Left ventricle myocardium superior (tissue), 1 donor: ENCODE measurements at regions of chr9 and their contacts with region 1.

Region 1: GRCh38 chr9:83219152-83219923 is 156.4 kb upstream of the RASEF start:
- DNase-seq: peak; percentile 87
- ATAC-seq: peak; percentile 98

Region 2: DNA sequence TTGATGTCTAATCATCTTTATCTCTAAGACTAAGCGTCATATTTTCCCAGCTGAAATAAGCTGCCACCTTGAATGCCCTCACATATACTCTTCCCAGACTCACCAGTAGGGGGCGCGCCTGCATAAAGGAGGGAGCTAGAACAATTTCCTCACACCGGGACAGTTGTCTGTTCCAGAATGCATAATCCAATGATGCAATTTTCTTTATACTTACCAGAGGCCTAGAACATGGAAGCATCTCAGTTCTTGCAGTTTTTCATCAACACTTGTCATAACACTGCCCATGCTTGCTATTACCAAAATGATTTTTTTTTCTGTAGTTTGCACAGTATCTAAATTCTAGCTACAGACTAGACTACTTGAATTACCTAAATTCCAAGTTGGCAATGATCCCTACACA is 115.0 kb after region 1 on chr9:
- intact Hi-C with region 1: loop called (anchors 10 kb)
- DNase-seq: peak; percentile 88
- ATAC-seq: peak; percentile 95

Region 3: GRCh38 chr9:83733739-83734138 is 514.4 kb after region 1 on chr9:
- intact Hi-C with region 1: no loop called
- DNase-seq: no peak
- ATAC-seq: no peak

Region 4: DNA sequence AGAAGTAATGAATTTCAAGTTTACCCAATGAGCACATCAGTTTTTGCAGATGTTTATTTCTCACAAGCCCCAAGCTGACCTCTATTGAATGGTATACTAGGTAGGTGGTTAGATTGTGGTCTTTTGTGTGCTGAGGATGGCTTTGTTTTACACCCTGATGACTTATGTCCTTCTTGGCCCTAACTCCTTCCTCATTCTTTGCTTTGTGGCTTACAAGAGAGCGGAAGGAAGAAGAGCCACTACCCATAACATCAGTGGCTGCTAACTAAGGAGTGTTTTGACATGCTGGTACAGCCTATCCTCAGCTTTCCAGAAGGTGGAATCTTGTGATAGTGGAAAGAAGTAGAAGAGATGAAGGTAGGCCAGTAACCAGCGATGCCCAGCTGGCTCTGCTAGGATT is 1364.5 kb after region 1 on chr9:
- intact Hi-C with region 1: no loop called
- DNase-seq: no peak
- ATAC-seq: no peak